ENCODE measurements at regions of chr14 and their contacts with region 1.

Region 1: GRCh38 chr14:101774006-101774795 is 12.7 kb downstream of the PPP2R5C start:
- DNase-seq: no peak
- H3K4me3 ChIP-seq: no peak overlapping the region
- H3K27ac ChIP-seq: no peak overlapping the region
- H3K4me1 ChIP-seq: no peaks in the 10 kb centered on the region
- H3K27me3 ChIP-seq: peaks cover 10 to 11% of the 10 kb centered on the region in 2 experiments
- CTCF ChIP-seq: no peak
- POLR2A ChIP-seq: no peak

Region 2: DNA sequence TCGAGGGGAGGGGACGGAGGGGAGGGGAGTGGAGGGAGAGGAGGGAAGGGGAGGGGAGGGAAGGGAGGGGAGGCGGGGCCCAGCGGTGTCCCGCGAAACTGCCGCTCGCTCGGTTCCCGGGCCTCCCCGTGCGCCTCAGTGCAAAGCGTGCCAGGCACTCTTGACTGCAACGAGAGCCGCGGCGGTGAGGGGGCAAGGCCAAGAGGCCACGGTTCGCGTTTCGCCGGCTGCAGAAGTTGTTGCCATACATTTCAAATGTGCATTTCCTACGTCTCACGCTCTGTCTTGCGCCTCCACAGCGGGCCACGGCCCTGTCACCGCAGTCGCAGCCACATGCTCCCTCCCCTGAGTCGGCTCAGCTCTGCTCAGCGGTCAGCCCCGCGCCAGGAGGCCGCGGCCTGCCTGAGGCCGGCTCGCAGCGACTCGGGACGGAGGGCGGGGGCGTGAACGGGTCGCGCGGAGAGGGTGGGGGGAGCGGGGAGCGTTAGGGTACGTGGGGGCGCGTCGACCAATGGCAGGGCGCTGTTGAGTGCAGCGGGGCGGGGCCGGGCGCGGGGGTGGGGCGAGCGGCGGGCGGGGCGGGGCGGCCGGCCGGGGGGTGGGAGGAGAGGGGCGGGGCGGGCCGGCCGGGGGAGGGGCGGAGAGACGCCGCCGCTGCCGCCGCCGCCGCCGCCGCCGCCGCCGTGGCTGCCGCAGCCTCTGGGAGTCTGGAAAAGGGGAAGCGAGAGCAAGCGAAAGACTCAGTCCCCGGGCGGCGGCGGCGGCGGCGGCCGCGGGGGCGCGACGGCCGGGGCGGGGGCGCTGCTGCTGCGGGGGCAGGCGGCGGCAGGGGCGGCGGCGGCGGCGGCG is 12.9 kb before region 1 on chr14 and contains the start of gene PPP2R5C:
- CTCF ChIA-PET with region 1: interaction called, 42 read pairs
- POLR2A ChIA-PET with region 1: interaction called, 3 read pairs
- dilution Hi-C with region 1: no loop called
- intact Hi-C with region 1: no loop called
- DNase-seq: peak; percentile 83
- H3K4me3 ChIP-seq: peak within 1 kb of the TSS; percentile 50 to 64 (median 52)
- H3K27ac ChIP-seq: no peak within 1 kb of the TSS
- H3K4me1 ChIP-seq: peaks cover 6% of the 10 kb centered on the region
- H3K27me3 ChIP-seq: peaks cover 13 to 32% of the 10 kb centered on the region in 2 experiments
- CTCF ChIP-seq: no peak
- POLR2A ChIP-seq: no peak
- total RNA-seq, gene PPP2R5C: 83.6 and 89.0 TPM in 2 replicates

Region 3: DNA sequence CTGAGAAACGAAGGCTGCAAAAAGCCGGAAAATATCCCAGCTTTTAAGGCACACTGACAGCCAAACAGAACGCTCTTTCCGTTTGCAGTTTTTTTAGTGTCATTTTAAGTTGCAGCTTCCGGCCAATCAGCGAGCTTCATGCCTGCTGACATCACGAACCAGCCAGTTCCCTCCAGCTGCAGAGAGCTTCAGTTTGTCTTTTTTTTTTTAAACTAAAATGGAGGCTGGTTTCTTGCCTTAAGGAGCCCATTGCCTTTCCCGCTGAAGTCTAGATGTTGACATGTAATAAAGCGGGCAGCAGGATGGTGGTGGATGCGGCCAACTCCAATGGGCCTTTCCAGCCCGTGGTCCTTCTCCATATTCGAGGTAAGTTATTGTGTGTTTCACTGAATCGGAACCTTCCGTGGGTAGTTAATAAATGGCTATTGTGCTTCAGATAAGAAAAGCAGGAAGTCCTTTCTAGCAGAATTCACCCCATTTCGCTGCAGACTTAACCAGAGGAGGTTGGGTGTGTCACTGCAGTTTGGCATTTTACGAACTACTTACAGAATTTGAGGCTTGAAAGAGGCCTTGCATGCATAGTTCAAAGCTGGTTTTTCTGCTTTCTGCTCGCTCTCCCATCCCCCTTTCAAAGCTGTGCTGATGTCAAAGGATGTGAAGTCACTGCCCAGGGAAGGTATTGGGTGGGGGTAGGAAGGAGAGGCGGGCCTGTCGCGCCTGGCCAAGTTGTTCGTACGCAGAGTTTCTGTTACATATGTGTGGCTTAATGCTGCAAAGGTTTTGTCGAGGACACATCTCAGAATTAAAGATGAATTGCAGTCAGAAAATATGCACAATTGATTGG is 35.7 kb after region 1 on chr14:
- CTCF ChIA-PET with region 1: interaction called, 14 read pairs
- POLR2A ChIA-PET with region 1: interaction called, 6 read pairs
- dilution Hi-C with region 1: no loop called
- intact Hi-C with region 1: loop called (anchors 1 kb)
- DNase-seq: peak; percentile 95
- H3K4me3 ChIP-seq: peak overlapping the region; percentile 57 to 83 (median 80)
- H3K27ac ChIP-seq: peak overlapping the region; percentile 89
- H3K4me1 ChIP-seq: peaks cover 16% of the 10 kb centered on the region
- H3K27me3 ChIP-seq: no peaks in the 10 kb centered on the region
- CTCF ChIP-seq: no peak
- POLR2A ChIP-seq: peak; percentile 62

Region 4: GRCh38 chr14:101876555-101876938 is 102.3 kb after region 1 on chr14:
- CTCF ChIA-PET with region 1: interaction called, 11 read pairs
- POLR2A ChIA-PET with region 1: no interaction called
- dilution Hi-C with region 1: no loop called
- intact Hi-C with region 1: no loop called
- DNase-seq: peak; percentile 99
- H3K4me3 ChIP-seq: no peak overlapping the region
- H3K27ac ChIP-seq: peak overlapping the region; percentile 70
- H3K4me1 ChIP-seq: peaks cover 20% of the 10 kb centered on the region
- H3K27me3 ChIP-seq: no peaks in the 10 kb centered on the region
- CTCF ChIP-seq: no peak
- POLR2A ChIP-seq: no peak

Region 5: GRCh38 chr14:101899263-101899662 is 125.1 kb after region 1 on chr14:
- CTCF ChIA-PET with region 1: interaction called, 66 read pairs
- POLR2A ChIA-PET with region 1: no interaction called
- dilution Hi-C with region 1: no loop called
- intact Hi-C with region 1: no loop called
- DNase-seq: no peak
- H3K4me3 ChIP-seq: no peak overlapping the region
- H3K27ac ChIP-seq: no peak overlapping the region
- H3K4me1 ChIP-seq: no peaks in the 10 kb centered on the region
- H3K27me3 ChIP-seq: no peaks in the 10 kb centered on the region
- CTCF ChIP-seq: no peak
- POLR2A ChIP-seq: no peak

Region 6: DNA sequence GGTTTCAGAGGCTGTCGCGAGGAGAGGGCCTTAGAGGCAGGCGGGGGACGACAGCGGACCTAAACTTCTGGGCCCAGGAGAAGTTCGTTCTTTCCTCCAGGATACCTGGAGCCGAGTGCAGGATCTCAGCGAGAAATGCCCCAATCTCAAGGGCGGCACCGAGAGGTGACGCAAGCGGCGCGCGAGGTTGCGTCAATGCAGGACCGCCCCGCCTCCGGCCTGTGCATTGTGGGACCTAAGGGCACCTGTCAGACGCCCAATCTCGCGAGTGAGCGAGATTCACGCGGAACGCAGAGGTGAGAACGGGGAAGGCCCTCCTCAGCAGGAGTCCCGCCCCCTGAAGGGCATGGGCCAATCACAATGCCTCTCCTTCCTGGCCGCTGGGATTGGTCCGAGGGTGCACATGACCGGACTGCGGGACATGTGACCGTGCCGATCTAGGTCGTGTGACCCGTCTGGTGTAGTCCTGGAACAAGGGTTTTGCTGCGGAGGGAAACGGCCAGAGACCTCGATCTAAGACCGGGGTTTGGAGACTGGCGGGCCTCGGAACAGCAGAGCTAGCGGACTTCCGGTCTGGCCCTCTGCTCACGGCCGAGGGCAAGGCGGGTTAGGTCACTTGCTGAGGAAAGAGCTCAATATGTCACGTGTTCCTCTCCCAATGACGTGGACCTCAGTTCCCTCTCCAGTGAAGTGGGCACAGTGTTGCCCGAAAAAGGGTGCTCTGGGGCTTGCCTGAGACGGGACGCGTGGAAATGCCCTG is 173.9 kb after region 1 on chr14:
- CTCF ChIA-PET with region 1: interaction called, 124 read pairs
- POLR2A ChIA-PET with region 1: no interaction called
- dilution Hi-C with region 1: no loop called
- intact Hi-C with region 1: loop called (anchors 2 kb)
- DNase-seq: peak; percentile 100
- H3K4me3 ChIP-seq: peak overlapping the region; percentile 34 to 74 (median 53)
- H3K27ac ChIP-seq: peak overlapping the region; percentile 80
- H3K4me1 ChIP-seq: peaks cover 10% of the 10 kb centered on the region
- H3K27me3 ChIP-seq: peaks cover 6 to 8% of the 10 kb centered on the region in 2 experiments
- CTCF ChIP-seq: no peak
- POLR2A ChIP-seq: peak; percentile 88

Region 7: GRCh38 chr14:101972268-101972774 is 198.1 kb after region 1 on chr14:
- CTCF ChIA-PET with region 1: interaction called, 12 read pairs
- POLR2A ChIA-PET with region 1: no interaction called
- dilution Hi-C with region 1: no loop called
- intact Hi-C with region 1: no loop called
- DNase-seq: peak; percentile 99
- H3K4me3 ChIP-seq: peak overlapping the region in 1 of 3 experiments; percentile 57
- H3K27ac ChIP-seq: peak overlapping the region; percentile 94
- H3K4me1 ChIP-seq: peaks cover 24% of the 10 kb centered on the region
- H3K27me3 ChIP-seq: no peaks in the 10 kb centered on the region
- CTCF ChIP-seq: no peak
- POLR2A ChIP-seq: peak; percentile 65

Region 8: DNA sequence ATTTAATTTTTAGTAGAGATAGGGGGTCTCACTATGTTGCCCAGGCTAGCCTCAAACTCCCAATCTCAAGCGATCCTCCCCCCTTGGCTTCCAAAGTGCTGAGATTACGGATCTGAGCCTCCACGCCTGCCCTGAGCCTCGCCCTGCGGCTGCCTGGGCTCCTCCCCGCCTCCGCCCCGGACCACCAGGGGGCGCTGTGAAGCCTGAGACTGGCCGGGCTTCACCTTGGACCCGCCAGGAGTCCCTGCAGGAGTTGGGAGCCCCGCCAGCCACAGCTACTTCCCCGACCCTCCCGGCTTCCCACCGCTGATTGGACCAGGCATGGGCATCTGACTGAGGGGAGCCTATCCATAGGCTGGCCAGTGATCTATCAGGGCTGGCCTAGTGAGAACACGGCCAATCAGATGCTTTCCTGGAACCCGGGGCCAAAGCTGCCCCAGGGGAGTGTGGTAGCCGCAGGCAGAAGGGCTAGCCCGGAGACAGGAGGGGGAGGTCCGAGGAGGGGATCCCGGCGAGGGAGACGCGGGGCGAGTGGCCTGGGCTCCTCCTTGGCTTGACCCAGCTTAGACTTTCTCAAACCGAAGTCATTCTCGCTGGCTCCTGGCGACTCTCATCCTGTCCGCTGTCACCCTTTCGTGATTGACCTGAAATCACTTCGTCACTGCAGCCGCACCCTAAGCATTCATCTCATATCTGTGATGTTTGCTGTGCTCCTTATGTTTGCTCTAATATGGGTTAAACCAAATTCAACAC is 750.4 kb after region 1 on chr14:
- CTCF ChIA-PET with region 1: no interaction called
- POLR2A ChIA-PET with region 1: no interaction called
- dilution Hi-C with region 1: no loop called
- intact Hi-C with region 1: no loop called
- DNase-seq: peak; percentile 98
- H3K4me3 ChIP-seq: peak overlapping the region; percentile 16 to 57 (median 45)
- H3K27ac ChIP-seq: no peak overlapping the region
- H3K4me1 ChIP-seq: peaks cover 28% of the 10 kb centered on the region
- H3K27me3 ChIP-seq: no peaks in the 10 kb centered on the region
- CTCF ChIP-seq: peak; percentile 98 to 100
- POLR2A ChIP-seq: peak; percentile 90